ENCODE measurements at regions of chr17 and their contacts with region 1.

Region 1: GRCh38 chr17:50200457-50201275 is 765 bp downstream of the COL1A1 start:
- DNase-seq: peak; percentile 84 to 96
- H3K4me3 ChIP-seq: peak overlapping the region; percentile 49 to 72 (median 60)
- H3K27ac ChIP-seq: no peak overlapping the region
- H3K4me1 ChIP-seq: peaks cover 0 to 5% (median 1%) of the 10 kb centered on the region in 4 experiments; a peak in 5 of 7 replicates
- H3K27me3 ChIP-seq: peaks cover 0 to 29% (median 14%) of the 10 kb centered on the region in 4 experiments; a peak in 5 of 7 replicates
- CTCF ChIP-seq: peak; percentile 76 to 85 (median 85)
- EP300 ChIP-seq: no peak
- POLR2A ChIP-seq: no peak
- RAD21 ChIP-seq: peak; percentile 89 to 90

Region 2: GRCh38 chr17:49887086-49888028 is 313.3 kb before region 1 on chr17:
- CTCF ChIA-PET with region 1: no interaction called
- POLR2A ChIA-PET with region 1: no interaction called
- DNase-seq: no peak
- H3K4me3 ChIP-seq: peak overlapping the region in 1 of 4 experiments; percentile 2; a peak in 1 of 8 replicates
- H3K27ac ChIP-seq: no peak overlapping the region
- H3K4me1 ChIP-seq: peaks cover 4 to 16% (median 13%) of the 10 kb centered on the region in 4 experiments
- H3K27me3 ChIP-seq: peaks cover 3 to 26% (median 20%) of the 10 kb centered on the region in 4 experiments
- CTCF ChIP-seq: no peak
- EP300 ChIP-seq: no peak
- POLR2A ChIP-seq: no peak
- RAD21 ChIP-seq: no peak; a peak in 1 of 4 replicates

Region 3: DNA sequence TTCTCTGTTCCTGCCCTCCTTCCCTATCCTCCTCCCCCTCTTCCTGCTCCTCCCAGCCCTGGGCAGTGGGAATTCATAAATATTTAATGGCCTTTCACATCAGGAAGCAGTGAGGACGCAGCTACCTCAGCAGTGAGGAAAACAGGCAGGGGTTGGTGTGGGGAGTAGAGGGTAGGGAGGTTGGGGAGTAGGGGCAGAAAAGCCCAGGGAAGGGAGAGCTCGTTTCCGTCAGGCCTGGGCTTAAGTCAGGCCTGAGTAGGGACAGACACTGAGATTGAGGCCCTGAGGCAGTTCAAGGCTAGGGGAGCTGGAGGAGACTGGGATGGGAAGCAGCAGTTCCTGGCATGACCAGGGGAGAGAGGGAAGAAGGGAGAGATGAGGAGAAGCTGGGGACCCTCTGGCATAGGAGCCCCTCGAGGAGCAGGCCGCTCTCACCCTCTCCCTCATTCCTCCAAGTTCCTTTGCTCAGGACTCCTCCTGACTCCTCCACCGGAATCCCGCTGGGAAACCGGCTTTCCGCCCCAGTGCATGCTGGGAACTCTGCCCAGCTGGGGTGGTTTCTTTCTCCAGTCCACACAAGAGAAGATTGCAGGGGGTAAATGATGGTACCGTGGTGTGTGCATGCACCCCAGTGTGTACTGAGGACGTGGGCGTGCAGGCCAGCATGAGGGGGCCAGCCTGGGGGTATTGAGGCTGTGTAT is 76.9 kb before region 1 on chr17:
- CTCF ChIA-PET with region 1: no interaction called
- POLR2A ChIA-PET with region 1: no interaction called
- DNase-seq: no peak
- H3K4me3 ChIP-seq: 0 out of 8 replicates have a peak overlapping the region, but pooled peaks of 1 of the 4 experiments have one; percentile 3
- H3K27ac ChIP-seq: peak overlapping the region; percentile 37
- H3K4me1 ChIP-seq: peaks cover 5 to 24% (median 19%) of the 10 kb centered on the region in 4 experiments
- H3K27me3 ChIP-seq: peaks cover 0 to 11% (median 3%) of the 10 kb centered on the region in 4 experiments; a peak in 5 of 7 replicates
- CTCF ChIP-seq: no peak
- EP300 ChIP-seq: no peak
- POLR2A ChIP-seq: no peak
- RAD21 ChIP-seq: no peak

Region 4: GRCh38 chr17:50169121-50169764 is 31.4 kb before region 1 on chr17:
- CTCF ChIA-PET with region 1: interaction called, 145 read pairs
- POLR2A ChIA-PET with region 1: interaction called, 3 read pairs
- DNase-seq: peak in 1 of 2 experiments; percentile 73
- H3K4me3 ChIP-seq: no peak overlapping the region
- H3K27ac ChIP-seq: no peak overlapping the region
- H3K4me1 ChIP-seq: peaks cover 0 to 14% (median 8%) of the 10 kb centered on the region in 4 experiments; a peak in 5 of 7 replicates
- H3K27me3 ChIP-seq: no peaks in the 10 kb centered on the region
- CTCF ChIP-seq: peak; percentile 80 to 98 (median 96)
- EP300 ChIP-seq: no peak
- POLR2A ChIP-seq: no peak
- RAD21 ChIP-seq: peak; percentile 96 to 97

Region 5: GRCh38 chr17:50213026-50214022 is 12.7 kb after region 1 on chr17:
- CTCF ChIA-PET with region 1: interaction called, 234 read pairs
- POLR2A ChIA-PET with region 1: interaction called, 17 read pairs
- DNase-seq: no peak
- H3K4me3 ChIP-seq: no peak overlapping the region
- H3K27ac ChIP-seq: no peak overlapping the region
- H3K4me1 ChIP-seq: peaks cover 13 to 36% (median 28%) of the 10 kb centered on the region in 4 experiments
- H3K27me3 ChIP-seq: no peaks in the 10 kb centered on the region; a peak in 1 of 7 replicates
- CTCF ChIP-seq: peak; percentile 35 to 56 (median 52); a peak in 3 of 4 replicates
- EP300 ChIP-seq: no peak
- POLR2A ChIP-seq: no peak
- RAD21 ChIP-seq: peak; percentile 18 to 43; a peak in 2 of 4 replicates

Region 6: DNA sequence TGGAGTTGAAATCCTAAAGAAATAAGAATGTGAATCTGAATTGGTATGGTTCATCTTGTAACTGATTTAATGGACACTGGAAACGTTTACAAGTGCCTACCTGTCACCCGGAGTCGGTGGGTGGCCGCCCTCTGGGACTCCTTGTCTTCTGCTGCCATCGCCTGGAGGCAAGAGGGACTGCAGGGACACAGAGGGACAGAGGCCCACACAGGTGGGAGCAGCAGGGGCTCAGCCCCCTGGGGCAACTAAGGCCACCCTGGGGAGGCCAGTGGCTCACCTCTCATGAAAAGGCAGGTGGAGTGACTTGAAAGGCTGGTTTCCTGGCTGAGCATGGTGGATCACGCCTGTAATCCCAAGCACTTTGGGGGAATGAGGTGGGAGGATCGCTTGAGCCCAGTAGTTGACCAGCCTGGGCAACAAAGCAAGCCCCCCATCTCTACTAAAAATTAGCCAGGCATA is 96.8 kb after region 1 on chr17:
- CTCF ChIA-PET with region 1: interaction called, 1,349 read pairs
- POLR2A ChIA-PET with region 1: interaction called, 14 read pairs
- DNase-seq: peak; percentile 50 to 93
- H3K4me3 ChIP-seq: no peak overlapping the region
- H3K27ac ChIP-seq: no peak overlapping the region
- H3K4me1 ChIP-seq: peaks cover 0 to 4% (median under 1%) of the 10 kb centered on the region in 4 experiments; a peak in 2 of 7 replicates
- H3K27me3 ChIP-seq: no peaks in the 10 kb centered on the region
- CTCF ChIP-seq: peak; percentile 93 to 96 (median 94)
- EP300 ChIP-seq: no peak
- POLR2A ChIP-seq: no peak
- RAD21 ChIP-seq: peak; percentile 99 to 100

Region 7: GRCh38 chr17:50331085-50331791 is 130.6 kb after region 1 on chr17:
- CTCF ChIA-PET with region 1: interaction called, 27 read pairs
- POLR2A ChIA-PET with region 1: interaction called, 4 read pairs
- DNase-seq: no peak
- H3K4me3 ChIP-seq: no peak overlapping the region
- H3K27ac ChIP-seq: no peak overlapping the region
- H3K4me1 ChIP-seq: peaks cover 0 to 2% (median 0%) of the 10 kb centered on the region in 4 experiments; a peak in 1 of 7 replicates
- H3K27me3 ChIP-seq: no peaks in the 10 kb centered on the region
- CTCF ChIP-seq: no peak
- EP300 ChIP-seq: no peak
- POLR2A ChIP-seq: no peak
- RAD21 ChIP-seq: no peak

Measured in H1 (cell line).